ENCODE measurements at regions of chr17 and their contacts with region 1.

Region 1: GRCh38 chr17:48215583-48216139 is 108.1 kb downstream of the SNX11 start:
- DNase-seq: peak; percentile 75 to 80
- ATAC-seq: peak; percentile 97 to 99
- H3K4me3 ChIP-seq: no peak overlapping the region
- H3K27ac ChIP-seq: peak overlapping the region in 1 of 2 experiments; percentile 2; a peak in 1 of 6 replicates
- H3K4me1 ChIP-seq: no peaks in the 10 kb centered on the region
- CTCF ChIP-seq: peak; percentile 85
- EP300 ChIP-seq: no peak
- POLR2A ChIP-seq: no peak
- RAD21 ChIP-seq: peak; percentile 94 to 98

Region 2: GRCh38 chr17:47955497-47956340 is 259.9 kb before region 1 on chr17:
- CTCF ChIA-PET with region 1: no interaction called
- POLR2A ChIA-PET with region 1: no interaction called
- DNase-seq: no peak
- ATAC-seq: no peak
- H3K4me3 ChIP-seq: no peak overlapping the region
- H3K27ac ChIP-seq: peak overlapping the region; percentile 72 to 75
- H3K4me1 ChIP-seq: peaks cover 32% of the 10 kb centered on the region
- CTCF ChIP-seq: no peak
- EP300 ChIP-seq: no peak
- POLR2A ChIP-seq: no peak
- RAD21 ChIP-seq: no peak

Region 3: GRCh38 chr17:48181653-48182052 is 34.0 kb before region 1 on chr17:
- CTCF ChIA-PET with region 1: interaction called, 16 read pairs
- POLR2A ChIA-PET with region 1: no interaction called
- DNase-seq: peak; percentile 50 to 69
- ATAC-seq: peak; percentile 76 to 95; a peak in 4 of 6 replicates
- H3K4me3 ChIP-seq: no peak overlapping the region
- H3K27ac ChIP-seq: no peak overlapping the region
- H3K4me1 ChIP-seq: peaks cover 5% of the 10 kb centered on the region; the same call in 1 of the 3 replicates
- CTCF ChIP-seq: peak; percentile 69
- EP300 ChIP-seq: no peak
- POLR2A ChIP-seq: no peak
- RAD21 ChIP-seq: peak; percentile 71 to 87

Region 4: GRCh38 chr17:48241131-48241591 is 25.5 kb after region 1 on chr17:
- CTCF ChIA-PET with region 1: interaction called, 24 read pairs
- POLR2A ChIA-PET with region 1: no interaction called
- DNase-seq: peak; percentile 74 to 90
- ATAC-seq: peak; percentile 50 to 73; a peak in 5 of 6 replicates
- H3K4me3 ChIP-seq: no peak overlapping the region
- H3K27ac ChIP-seq: peak overlapping the region; percentile 62 to 77
- H3K4me1 ChIP-seq: peaks cover 82% of the 10 kb centered on the region
- CTCF ChIP-seq: no peak
- EP300 ChIP-seq: peak in 1 of 2 experiments; percentile 41; a peak in 1 of 5 replicates
- POLR2A ChIP-seq: no peak
- RAD21 ChIP-seq: no peak

Region 5: GRCh38 chr17:48307814-48308411 is 92.3 kb after region 1 on chr17:
- CTCF ChIA-PET with region 1: interaction called, 25 read pairs
- POLR2A ChIA-PET with region 1: no interaction called
- DNase-seq: peak; percentile 58 to 78
- ATAC-seq: peak; percentile 96 to 98
- H3K4me3 ChIP-seq: no peak overlapping the region
- H3K27ac ChIP-seq: no peak overlapping the region
- H3K4me1 ChIP-seq: no peaks in the 10 kb centered on the region
- CTCF ChIP-seq: peak; percentile 89
- EP300 ChIP-seq: no peak
- POLR2A ChIP-seq: no peak
- RAD21 ChIP-seq: peak; percentile 69 to 76

Region 6: DNA sequence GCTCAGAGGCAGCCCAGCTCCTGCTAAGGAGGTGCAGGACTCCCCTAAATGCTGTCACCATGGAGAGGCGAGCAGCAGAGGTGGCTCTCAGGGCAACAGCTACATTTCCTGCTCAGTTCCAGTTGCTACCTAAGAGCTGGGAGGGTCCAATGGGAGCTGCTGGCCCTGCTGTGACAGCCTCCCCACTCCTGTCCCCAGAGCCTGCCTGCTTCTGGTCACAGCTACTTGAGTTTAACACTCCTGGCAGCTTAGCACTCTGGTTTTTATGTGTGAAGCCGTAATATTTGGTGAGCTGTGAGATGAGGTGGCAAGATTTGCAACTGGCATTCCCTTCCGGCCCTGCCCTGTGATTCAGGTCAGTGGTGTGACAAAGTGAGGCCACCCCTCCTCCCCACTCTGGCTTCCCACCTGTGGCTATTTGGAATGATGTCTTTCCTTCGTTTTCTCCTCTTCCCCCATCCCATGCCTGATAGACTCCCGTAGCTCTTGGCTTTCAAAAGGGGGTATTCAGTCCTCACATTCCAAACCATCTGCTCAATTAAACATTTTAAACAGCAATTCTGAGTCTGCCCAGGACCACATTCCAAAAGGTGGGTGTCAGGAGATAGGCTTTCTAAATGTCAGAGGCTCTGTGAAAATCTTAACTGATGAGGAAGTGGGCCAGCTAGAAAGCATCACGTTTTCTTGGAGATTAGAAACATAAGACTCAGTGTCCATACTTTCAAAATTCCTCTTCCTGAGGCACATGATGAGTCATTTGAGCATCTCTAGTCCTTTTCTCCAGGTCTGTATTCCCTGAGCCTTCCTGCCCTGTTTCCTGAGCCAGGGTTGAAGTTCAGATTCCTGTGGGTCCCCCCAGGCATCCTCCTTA is 257.0 kb after region 1 on chr17:
- CTCF ChIA-PET with region 1: interaction called, 11 read pairs
- POLR2A ChIA-PET with region 1: no interaction called
- DNase-seq: peak in 1 of 2 experiments; percentile 32
- ATAC-seq: peak; percentile 38 to 48; a peak in 4 of 6 replicates
- H3K4me3 ChIP-seq: no peak overlapping the region
- H3K27ac ChIP-seq: 0 out of 6 replicates have a peak overlapping the region, but pooled peaks of 1 of the 2 experiments have one; percentile 12
- H3K4me1 ChIP-seq: peaks cover 6% of the 10 kb centered on the region; the same call in 2 of the 3 replicates
- CTCF ChIP-seq: no peak
- EP300 ChIP-seq: no peak
- POLR2A ChIP-seq: no peak
- RAD21 ChIP-seq: no peak

Measured in A549 (cell line).